ENCODE measurements at regions of chr1 and their contacts with region 1.

Region 1: GRCh38 chr1:25343872-25344271 is 5.7 kb downstream of the TMEM50A start:
- DNase-seq: no peak
- ATAC-seq: peak in 1 of 8 donors; percentile 33
- H3K4me3 ChIP-seq: no peak overlapping the region
- H3K27ac ChIP-seq: no peak overlapping the region
- H3K4me1 ChIP-seq: peaks cover 3 to 49% (median 32%) of the 10 kb centered on the region in 9 donors
- H3K27me3 ChIP-seq: no peaks in the 10 kb centered on the region
- CTCF ChIP-seq: no peak

Region 2: DNA sequence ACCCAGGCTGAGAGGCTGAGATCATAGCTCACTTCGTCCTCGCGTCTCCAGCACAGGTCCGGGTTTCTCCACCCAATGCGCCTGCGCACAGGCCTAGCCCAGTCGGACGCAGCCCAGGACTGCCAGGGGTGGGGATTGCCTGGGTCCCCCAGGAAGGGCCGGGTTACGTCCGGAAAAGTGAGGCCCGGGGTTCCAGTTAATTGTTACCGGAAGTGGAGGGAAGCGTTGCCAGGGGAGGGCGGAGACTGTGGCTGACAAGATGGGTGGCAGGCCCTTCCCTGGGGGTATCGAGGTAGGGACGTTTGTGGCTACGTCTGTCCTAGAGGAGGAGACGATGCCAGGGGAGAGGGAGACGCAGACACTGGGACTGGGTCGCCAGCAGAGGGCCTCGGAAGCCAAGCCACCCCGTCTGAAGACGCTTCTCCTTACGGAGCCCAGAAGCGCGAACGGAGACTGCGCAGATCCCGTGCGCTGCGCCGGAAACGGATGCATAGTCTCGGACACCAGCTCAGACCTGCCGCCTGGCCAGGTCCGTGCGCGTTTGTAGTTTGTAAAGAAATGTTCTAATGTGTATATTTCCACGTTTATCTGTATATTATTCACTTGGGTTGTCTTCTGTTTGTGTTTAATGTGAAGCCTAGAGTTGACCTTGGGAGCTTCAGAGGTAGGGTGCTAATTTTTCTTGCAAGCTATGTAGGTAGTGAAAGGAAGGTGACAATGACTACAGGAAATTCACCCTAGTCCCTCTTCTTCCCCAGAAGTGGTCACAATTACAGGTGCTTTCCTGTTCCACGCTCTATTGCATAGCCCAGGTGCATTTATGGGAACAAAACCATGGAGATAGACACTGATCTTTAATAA is 104.0 kb before region 1 on chr1:
- intact Hi-C with region 1: loop called in 4 of 10 experiments (anchors 5 to 10 kb)
- DNase-seq: peak; percentile 89 to 92
- ATAC-seq: peak; percentile 90 to 96 (median 95)
- H3K4me3 ChIP-seq: peak overlapping the region; percentile 20 to 61 (median 48)
- H3K27ac ChIP-seq: peak overlapping the region; percentile 80 to 94 (median 88)
- H3K4me1 ChIP-seq: peaks cover 7 to 78% (median 61%) of the 10 kb centered on the region in 9 donors
- H3K27me3 ChIP-seq: no peaks in the 10 kb centered on the region
- CTCF ChIP-seq: peak; percentile 47 to 79 (median 63)

Region 3: DNA sequence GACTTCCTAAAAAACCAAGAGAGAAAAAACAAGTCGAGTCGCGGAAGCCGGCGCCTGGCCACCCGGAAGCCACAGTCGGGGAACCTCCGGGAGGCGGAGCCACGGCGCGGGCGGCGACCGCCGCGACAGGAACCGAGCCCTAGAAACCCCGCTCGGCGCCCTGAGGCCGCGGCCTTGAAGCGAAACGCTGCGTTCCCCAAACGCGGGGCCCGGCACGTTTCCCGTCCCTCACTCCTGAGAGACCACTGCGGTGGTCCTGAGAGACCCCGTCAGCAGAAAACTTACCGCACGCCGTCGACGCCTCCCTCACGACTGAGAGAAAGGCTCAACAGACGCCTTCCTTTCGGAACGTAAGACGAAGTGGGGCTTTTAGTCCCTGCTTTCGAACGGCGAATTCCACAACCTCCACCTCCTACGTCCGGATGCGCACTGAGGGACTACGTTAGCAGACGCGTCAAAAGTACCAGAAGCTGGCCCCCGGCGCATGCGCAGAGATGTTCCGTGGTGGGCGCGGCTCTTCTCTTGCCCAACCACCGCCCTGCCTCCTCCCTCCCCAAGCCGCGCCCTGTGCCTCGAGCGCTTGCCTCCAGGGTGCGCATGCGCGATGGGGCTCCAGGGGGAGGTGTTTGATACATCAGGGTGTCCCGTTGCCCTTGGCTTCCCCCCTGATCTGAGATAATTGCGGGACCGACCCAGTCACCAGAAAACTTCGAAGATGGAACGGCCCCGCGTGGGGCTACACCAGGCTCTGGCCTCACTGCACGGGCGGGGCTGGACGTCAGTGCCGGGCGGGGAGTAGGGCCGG is 96.6 kb before region 1 on chr1 and contains the start of gene RSRP1:
- intact Hi-C with region 1: loop called in 3 of 10 experiments (anchors 5 kb)
- DNase-seq: peak; percentile 100
- ATAC-seq: peak; percentile 94 to 98 (median 96)
- H3K4me3 ChIP-seq: peak within 1 kb of the TSS; percentile 76 to 96 (median 85)
- H3K27ac ChIP-seq: peak within 1 kb of the TSS; percentile 97 to 100 (median 99)
- H3K4me1 ChIP-seq: peaks cover 2 to 45% (median 34%) of the 10 kb centered on the region in 9 donors
- H3K27me3 ChIP-seq: no peaks in the 10 kb centered on the region
- CTCF ChIP-seq: peak in 1 of 9 donors; percentile 17
- total RNA-seq, gene RSRP1: 21.1 to 47.3 (median 27.7) TPM